Activated CD4-positive, alpha-beta memory T cell treated with anti-CD3 and anti-CD28 coated beads, Interleukin-2, amount 10 ng/mL, durations not matched to agents 7 days and 5 days (primary cell): ENCODE measurements at regions of chr16 and their contacts with region 1.

Region 1: GRCh38 chr16:69339289-69340108 is at the starts of genes COG8 and NIP7:
- DNase-seq: peak; percentile 93
- H3K4me3 Mint-ChIP-seq: peak within 1 kb of the TSS; percentile 97
- H3K27ac Mint-ChIP-seq: peak within 1 kb of the TSS; percentile 91
- H3K4me1 Mint-ChIP-seq: peaks cover 56% of the 10 kb centered on the region
- H3K27me3 Mint-ChIP-seq: no peaks in the 10 kb centered on the region
- total RNA-seq, gene COG8: 30.6 to 30.7 TPM
- total RNA-seq, gene NIP7: 36.0 to 36.7 TPM

Region 2: GRCh38 chr16:69204172-69204571 is 135.3 kb before region 1 on chr16:
- CTCF ChIA-PET with region 1: no interaction called
- POLR2A ChIA-PET with region 1: no interaction called
- DNase-seq: no peak
- H3K4me3 Mint-ChIP-seq: no peak overlapping the region
- H3K27ac Mint-ChIP-seq: no peak overlapping the region
- H3K4me1 Mint-ChIP-seq: peaks cover 16% of the 10 kb centered on the region
- H3K27me3 Mint-ChIP-seq: no peaks in the 10 kb centered on the region

Region 3: DNA sequence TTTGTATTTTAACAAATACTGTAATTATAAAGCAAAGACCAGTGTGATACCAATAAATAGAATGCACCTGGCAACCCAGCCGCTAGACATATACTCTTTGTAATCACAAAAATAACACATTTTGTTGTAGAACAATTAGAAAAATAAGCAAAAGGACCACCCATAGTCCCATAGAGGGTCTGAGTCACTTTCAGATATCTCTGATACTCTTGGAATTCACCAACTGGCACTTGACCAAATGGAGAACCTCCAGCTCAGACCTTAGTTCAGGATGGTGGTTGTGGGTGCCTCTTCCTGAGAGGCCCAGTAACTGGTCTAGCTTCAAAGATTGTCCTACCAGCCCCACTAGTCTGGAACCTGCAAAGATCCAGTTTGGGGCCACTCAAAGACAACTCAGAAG is 47.1 kb after region 1 on chr16:
- CTCF ChIA-PET with region 1: interaction called, 5 read pairs
- POLR2A ChIA-PET with region 1: interaction called, 34 read pairs
- DNase-seq: no peak
- H3K4me3 Mint-ChIP-seq: peak overlapping the region; percentile 93
- H3K27ac Mint-ChIP-seq: no peak overlapping the region
- H3K4me1 Mint-ChIP-seq: peaks cover 32% of the 10 kb centered on the region
- H3K27me3 Mint-ChIP-seq: no peaks in the 10 kb centered on the region